AG04449 (cell line): ENCODE measurements at regions of chr22 and their contacts with region 1.

Region 1: DNA sequence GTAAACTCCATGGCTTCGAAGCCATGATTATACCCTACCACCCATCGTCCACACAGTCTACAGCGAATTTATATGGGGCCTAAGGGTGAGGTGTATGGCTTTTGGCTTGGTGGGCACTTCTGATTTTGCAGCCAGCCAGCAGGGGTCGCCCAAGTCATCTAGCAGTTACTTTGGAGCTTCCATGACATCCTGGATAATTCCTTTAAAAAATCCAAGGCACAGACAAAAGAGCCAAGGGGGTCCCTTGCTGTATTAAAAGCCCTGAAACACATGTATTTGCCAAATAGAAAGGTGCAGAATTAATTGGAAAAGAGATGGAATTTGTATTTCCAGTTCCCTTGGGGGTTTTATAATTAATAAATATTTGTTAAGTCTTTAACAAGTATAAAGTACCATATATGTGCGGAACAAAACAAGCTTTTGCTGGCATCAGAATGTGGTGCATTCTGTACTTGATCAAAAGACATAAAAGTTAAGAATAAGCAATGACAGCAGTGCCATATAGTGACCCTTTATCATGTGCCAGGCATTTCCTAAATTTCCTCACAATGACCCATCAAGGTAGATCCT is 132.8 kb upstream of the PITPNB start:
- DNase-seq: no peak
- H3K4me3 ChIP-seq: no peak overlapping the region
- CTCF ChIP-seq: peak; percentile 87

Region 2: GRCh38 chr22:28019881-28020871 is 31.7 kb before region 1 on chr22:
- CTCF ChIA-PET with region 1: interaction called, 30 read pairs
- POLR2A ChIA-PET with region 1: no interaction called
- DNase-seq: no peak
- H3K4me3 ChIP-seq: peak overlapping the region; percentile 43
- CTCF ChIP-seq: peak; percentile 92

Region 3: GRCh38 chr22:28222052-28222451 is 170.2 kb after region 1 on chr22:
- CTCF ChIA-PET with region 1: no interaction called
- POLR2A ChIA-PET with region 1: no interaction called
- DNase-seq: no peak
- H3K4me3 ChIP-seq: no peak overlapping the region
- CTCF ChIP-seq: no peak

Region 4: GRCh38 chr22:28247667-28248363 is 195.9 kb after region 1 on chr22:
- CTCF ChIA-PET with region 1: interaction called, 16 read pairs
- POLR2A ChIA-PET with region 1: no interaction called
- DNase-seq: no peak
- H3K4me3 ChIP-seq: no peak overlapping the region
- CTCF ChIP-seq: no peak

Region 5: GRCh38 chr22:28442264-28442710 is 390.4 kb after region 1 on chr22:
- CTCF ChIA-PET with region 1: interaction called, 68 read pairs
- POLR2A ChIA-PET with region 1: no interaction called
- DNase-seq: no peak
- H3K4me3 ChIP-seq: peak overlapping the region; percentile 64
- CTCF ChIP-seq: peak; percentile 84

Region 6: GRCh38 chr22:28594797-28595462 is 543.1 kb after region 1 on chr22:
- CTCF ChIA-PET with region 1: interaction called, 89 read pairs
- POLR2A ChIA-PET with region 1: no interaction called
- DNase-seq: peak; percentile 31
- H3K4me3 ChIP-seq: no peak overlapping the region
- CTCF ChIP-seq: peak; percentile 44